WTC11 (cell line): ENCODE measurements at regions of chr17 and their contacts with region 1.

Region 1: GRCh38 chr17:28743225-28744103 is at the start of gene TRAF4:
- DNase-seq: peak; percentile 83
- ATAC-seq: peak; percentile 57
- H3K4me3 Mint-ChIP-seq: peak within 1 kb of the TSS; percentile 88
- H3K27ac Mint-ChIP-seq: peak within 1 kb of the TSS; percentile 94
- H3K4me1 Mint-ChIP-seq: peaks cover 39% of the 10 kb centered on the region
- H3K27me3 Mint-ChIP-seq: no peaks in the 10 kb centered on the region
- CTCF ChIP-seq: no peak
- total RNA-seq, gene TRAF4: 192 to 268 TPM (median 192 TPM) in 3 replicates

Region 2: DNA sequence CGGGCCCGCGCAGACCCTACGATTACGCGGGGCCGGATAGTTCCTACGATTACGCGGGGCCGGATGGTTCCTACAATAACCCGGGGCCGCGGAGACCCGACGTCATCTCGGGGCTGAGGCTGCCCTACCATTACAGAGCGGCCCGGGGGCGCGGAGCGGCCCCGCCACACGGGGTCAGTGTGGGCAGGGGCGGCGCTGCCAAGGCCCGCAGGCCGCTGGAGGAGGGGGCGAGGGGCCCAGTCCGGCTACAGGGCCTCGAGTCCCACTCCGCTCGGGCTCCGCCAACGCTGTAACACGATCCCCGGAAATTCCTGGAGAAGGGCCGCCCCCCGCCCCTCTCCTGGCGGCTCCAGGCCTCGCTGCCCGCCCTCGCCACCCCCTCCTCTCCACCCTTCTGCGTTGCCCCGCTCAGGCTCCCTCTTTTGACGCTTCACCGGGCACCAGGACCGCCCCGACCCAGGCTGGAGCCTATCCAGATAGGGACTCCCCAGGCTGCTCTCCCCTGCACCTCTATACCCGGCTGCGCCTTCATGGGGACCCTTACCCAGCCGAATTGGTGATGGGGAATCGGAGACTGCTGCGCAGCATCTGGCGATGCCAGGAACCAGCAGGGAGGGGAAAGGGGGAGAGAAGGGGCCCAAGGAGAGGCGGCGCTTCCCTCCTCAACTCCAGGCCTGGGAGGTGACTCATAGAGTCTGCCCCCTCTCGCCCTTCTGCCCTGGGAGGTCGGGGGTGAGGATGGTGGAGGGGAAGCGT is 25.7 kb before region 1 on chr17 and contains the start of gene RAB34:
- CTCF ChIA-PET with region 1: interaction called, 13 read pairs
- POLR2A ChIA-PET with region 1: interaction called, 27 read pairs
- DNase-seq: peak; percentile 96
- ATAC-seq: peak; percentile 71
- H3K4me3 Mint-ChIP-seq: peak within 1 kb of the TSS; percentile 100
- H3K27ac Mint-ChIP-seq: peak within 1 kb of the TSS; percentile 97
- H3K4me1 Mint-ChIP-seq: peaks cover 47% of the 10 kb centered on the region
- H3K27me3 Mint-ChIP-seq: no peaks in the 10 kb centered on the region
- CTCF ChIP-seq: no peak
- total RNA-seq, gene RAB34: 153 to 181 TPM (median 162 TPM) in 3 replicates